Activated T-helper 1 cell treated with anti-CD3 and anti-CD28 coated beads, Interleukin-12 subunit alpha, Interleukin-12 subunit beta, Interleukin-2, Interleukin-4 antibody, amounts not matched to agents 30 ng/mL and 10 ng/mL and 1 ng/mL, durations not matched to agents 14 hours and 24 hours and 36 hours (primary cell): ENCODE measurements at regions of chr3 and their contacts with region 1.

Region 1: GRCh38 chr3:98817547-98818041 is 54.5 kb downstream of the ST3GAL6 start:
- DNase-seq: no peak
- H3K4me3 Mint-ChIP-seq: no peak overlapping the region
- H3K27ac Mint-ChIP-seq: no peak overlapping the region
- H3K4me1 Mint-ChIP-seq: no peaks in the 10 kb centered on the region
- H3K27me3 Mint-ChIP-seq: no peaks in the 10 kb centered on the region

Region 2: GRCh38 chr3:97793420-97794019 is 1024.1 kb before region 1 on chr3:
- intact Hi-C with region 1: loop called (anchors 10 kb)
- DNase-seq: peak; percentile 6
- H3K4me3 Mint-ChIP-seq: no peak overlapping the region
- H3K27ac Mint-ChIP-seq: no peak overlapping the region
- H3K4me1 Mint-ChIP-seq: no peaks in the 10 kb centered on the region
- H3K27me3 Mint-ChIP-seq: no peaks in the 10 kb centered on the region

Region 3: GRCh38 chr3:98329392-98330124 is 488.0 kb before region 1 on chr3:
- intact Hi-C with region 1: loop called (anchors 1 kb)
- DNase-seq: peak; percentile 28
- H3K4me3 Mint-ChIP-seq: no peak overlapping the region
- H3K27ac Mint-ChIP-seq: no peak overlapping the region
- H3K4me1 Mint-ChIP-seq: peaks cover 24% of the 10 kb centered on the region
- H3K27me3 Mint-ChIP-seq: peaks cover 32% of the 10 kb centered on the region

Region 4: GRCh38 chr3:98460220-98460619 is 357.4 kb before region 1 on chr3:
- intact Hi-C with region 1: no loop called
- DNase-seq: no peak
- H3K4me3 Mint-ChIP-seq: no peak overlapping the region
- H3K27ac Mint-ChIP-seq: no peak overlapping the region
- H3K4me1 Mint-ChIP-seq: no peaks in the 10 kb centered on the region
- H3K27me3 Mint-ChIP-seq: peaks cover 12% of the 10 kb centered on the region

Region 5: GRCh38 chr3:98602078-98602678 is 215.4 kb before region 1 on chr3:
- intact Hi-C with region 1: loop called (anchors 1 kb)
- DNase-seq: no peak
- H3K4me3 Mint-ChIP-seq: no peak overlapping the region
- H3K27ac Mint-ChIP-seq: no peak overlapping the region
- H3K4me1 Mint-ChIP-seq: peaks cover 13% of the 10 kb centered on the region
- H3K27me3 Mint-ChIP-seq: peaks cover 11% of the 10 kb centered on the region

Region 6: DNA sequence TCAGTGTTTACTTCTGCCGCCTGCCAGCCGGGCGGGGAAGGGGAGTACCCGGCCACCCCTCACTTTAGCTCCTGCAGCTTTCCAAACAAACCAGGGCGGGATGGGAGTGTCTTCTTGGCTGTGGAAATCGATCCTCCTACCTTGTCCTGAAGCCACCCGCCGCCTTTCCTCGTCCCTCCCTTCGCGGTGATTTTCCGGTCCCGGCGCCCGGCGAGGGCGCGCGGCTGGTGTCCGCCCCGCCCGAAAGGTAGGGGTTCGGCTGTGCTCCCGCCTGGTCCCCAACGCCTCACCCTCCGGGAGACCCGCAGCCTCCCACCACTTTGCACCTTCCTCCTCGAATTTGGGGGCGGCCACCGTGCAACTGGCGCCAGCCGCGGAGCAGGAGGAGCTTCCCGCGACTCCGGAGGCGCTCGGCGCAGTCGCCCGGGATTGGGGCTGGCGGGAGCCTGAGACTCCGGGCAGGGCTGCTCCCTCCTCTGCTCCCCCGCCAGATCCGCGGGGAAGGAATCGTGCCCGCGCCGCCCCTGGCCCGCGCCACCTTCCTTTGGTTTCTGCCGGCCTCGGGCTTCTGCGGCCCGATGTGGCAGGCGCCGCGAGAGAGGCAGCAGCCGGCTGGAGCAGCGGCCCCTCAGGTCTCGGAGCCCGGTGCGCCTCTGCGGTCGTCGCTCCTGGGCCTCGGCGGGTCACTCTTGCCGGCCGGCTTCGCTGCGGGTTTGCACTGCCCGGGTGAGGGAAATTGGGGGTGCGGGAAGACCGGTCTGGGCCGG is 85.1 kb before region 1 on chr3:
- intact Hi-C with region 1: no loop called
- DNase-seq: no peak
- H3K4me3 Mint-ChIP-seq: peak overlapping the region; percentile 65
- H3K27ac Mint-ChIP-seq: no peak overlapping the region
- H3K4me1 Mint-ChIP-seq: peaks cover 13% of the 10 kb centered on the region
- H3K27me3 Mint-ChIP-seq: peaks cover 53% of the 10 kb centered on the region

Region 7: GRCh38 chr3:98994128-98994762 is 176.7 kb after region 1 on chr3:
- intact Hi-C with region 1: loop called (anchors 5 kb)
- DNase-seq: no peak
- H3K4me3 Mint-ChIP-seq: no peak overlapping the region
- H3K27ac Mint-ChIP-seq: no peak overlapping the region
- H3K4me1 Mint-ChIP-seq: no peaks in the 10 kb centered on the region
- H3K27me3 Mint-ChIP-seq: no peaks in the 10 kb centered on the region

Region 8: GRCh38 chr3:99023590-99024192 is 206.1 kb after region 1 on chr3:
- intact Hi-C with region 1: loop called (anchors 10 kb)
- DNase-seq: no peak
- H3K4me3 Mint-ChIP-seq: no peak overlapping the region
- H3K27ac Mint-ChIP-seq: no peak overlapping the region
- H3K4me1 Mint-ChIP-seq: no peaks in the 10 kb centered on the region
- H3K27me3 Mint-ChIP-seq: peaks cover 2% of the 10 kb centered on the region

Region 9: GRCh38 chr3:99753268-99753975 is 935.8 kb after region 1 on chr3:
- intact Hi-C with region 1: loop called (anchors 1 kb)
- DNase-seq: no peak
- H3K4me3 Mint-ChIP-seq: no peak overlapping the region
- H3K27ac Mint-ChIP-seq: no peak overlapping the region
- H3K4me1 Mint-ChIP-seq: no peaks in the 10 kb centered on the region
- H3K27me3 Mint-ChIP-seq: peaks cover 25% of the 10 kb centered on the region